ENCODE measurements at regions of chr2 and their contacts with region 1.

Region 1: DNA sequence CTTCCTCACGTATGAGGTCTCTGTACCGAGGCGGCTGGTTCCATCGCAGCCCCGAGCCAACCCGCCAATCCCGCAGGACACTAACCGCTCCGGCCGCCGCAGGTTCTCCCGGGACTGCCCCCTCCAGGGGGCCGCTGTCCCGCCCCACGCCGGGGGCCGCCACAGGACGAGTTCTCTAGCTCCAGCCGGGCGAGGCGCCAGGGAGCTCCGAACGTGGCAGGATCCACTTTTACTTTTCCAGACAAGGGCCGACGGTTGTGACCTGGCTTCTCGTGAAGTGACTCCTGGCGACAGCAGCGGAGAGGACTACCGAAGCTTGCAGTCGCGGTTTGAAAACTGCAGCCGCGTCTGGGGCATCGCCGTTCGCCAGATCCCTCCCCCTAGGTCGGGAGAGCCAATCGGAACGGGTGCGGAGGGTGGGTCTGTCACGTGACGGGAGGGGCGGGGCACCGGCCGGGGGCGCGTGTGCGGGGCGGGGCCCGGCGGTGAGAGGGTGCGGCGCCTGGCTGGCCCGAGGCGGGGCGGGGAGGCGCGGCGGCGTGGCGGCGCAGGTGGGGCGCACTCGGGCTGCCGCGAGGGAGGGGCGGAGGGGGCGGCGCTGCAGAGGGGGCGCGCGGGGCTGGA is at the start of gene STK17B:
- DNase-seq: peak; percentile 96
- ATAC-seq: peak; percentile 73
- H3K4me3 ChIP-seq: peak within 1 kb of the TSS; percentile 96
- H3K27ac ChIP-seq: peak within 1 kb of the TSS; percentile 49
- H3K4me1 ChIP-seq: peaks cover 28% of the 10 kb centered on the region
- H3K27me3 ChIP-seq: no peaks in the 10 kb centered on the region
- CTCF ChIP-seq: no peak
- total RNA-seq, gene STK17B: 21.3 and 22.1 TPM in 2 replicates

Region 2: GRCh38 chr2:196131384-196131937 is 39.9 kb before region 1 on chr2:
- CTCF ChIA-PET with region 1: no interaction called
- POLR2A ChIA-PET with region 1: no interaction called
- intact Hi-C with region 1: loop called (anchors 2 kb)
- DNase-seq: peak; percentile 71
- ATAC-seq: peak; percentile 65
- H3K4me3 ChIP-seq: no peak overlapping the region
- H3K27ac ChIP-seq: no peak overlapping the region
- H3K4me1 ChIP-seq: no peaks in the 10 kb centered on the region
- H3K27me3 ChIP-seq: no peaks in the 10 kb centered on the region
- CTCF ChIP-seq: peak; percentile 72

Region 3: GRCh38 chr2:196143730-196144131 is 27.6 kb before region 1 on chr2:
- CTCF ChIA-PET with region 1: interaction called, 6 read pairs
- POLR2A ChIA-PET with region 1: interaction called, 4 read pairs
- intact Hi-C with region 1: loop called (anchors 1 kb)
- DNase-seq: peak; percentile 87
- ATAC-seq: peak; percentile 97
- H3K4me3 ChIP-seq: no peak overlapping the region
- H3K27ac ChIP-seq: peak overlapping the region; percentile 52
- H3K4me1 ChIP-seq: peaks cover 17% of the 10 kb centered on the region
- H3K27me3 ChIP-seq: no peaks in the 10 kb centered on the region
- CTCF ChIP-seq: no peak

Region 4: DNA sequence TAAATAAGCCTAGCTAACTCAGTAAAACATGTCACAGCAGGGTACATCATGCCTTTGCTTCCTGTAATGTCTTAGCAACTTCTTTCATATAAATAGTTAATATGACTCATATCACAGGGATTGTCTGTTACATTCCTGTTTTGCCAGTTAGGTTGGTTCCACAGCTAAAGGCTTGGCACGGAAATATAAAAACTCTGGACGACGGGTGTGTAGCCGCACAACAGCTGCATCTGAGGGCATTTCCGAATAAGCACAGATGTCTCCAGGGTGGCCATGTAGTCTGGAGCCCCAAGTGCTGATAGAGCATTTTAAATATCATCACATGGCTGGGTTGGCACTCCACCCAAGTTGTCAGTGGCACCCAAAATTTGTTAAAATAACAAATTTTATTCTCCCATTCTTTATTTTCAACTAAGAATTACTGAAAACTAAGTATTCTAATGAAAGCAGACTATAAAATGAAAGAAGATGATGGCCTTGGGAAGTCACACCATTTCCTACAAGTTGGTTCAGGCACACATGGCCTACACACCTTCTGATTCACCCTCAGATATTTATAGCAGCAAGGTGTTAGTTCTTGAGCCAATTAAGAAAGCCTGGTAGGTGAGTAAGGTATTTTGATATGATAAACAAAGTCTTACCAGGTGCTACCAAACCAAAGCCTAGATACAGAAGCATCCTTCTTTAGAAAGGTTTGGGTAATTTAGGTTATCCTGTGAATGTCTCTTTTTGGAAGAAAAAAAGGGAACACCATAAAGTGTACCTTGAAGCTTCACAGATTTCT is 61.9 kb after region 1 on chr2:
- CTCF ChIA-PET with region 1: no interaction called
- POLR2A ChIA-PET with region 1: interaction called, 10 read pairs
- intact Hi-C with region 1: loop called (anchors 2 kb)
- DNase-seq: peak; percentile 97
- ATAC-seq: peak; percentile 96
- H3K4me3 ChIP-seq: peak overlapping the region; percentile 13; the same call in 1 of the 2 replicates
- H3K27ac ChIP-seq: peak overlapping the region; percentile 77
- H3K4me1 ChIP-seq: peaks cover 26% of the 10 kb centered on the region
- H3K27me3 ChIP-seq: no peaks in the 10 kb centered on the region
- CTCF ChIP-seq: no peak

Region 5: DNA sequence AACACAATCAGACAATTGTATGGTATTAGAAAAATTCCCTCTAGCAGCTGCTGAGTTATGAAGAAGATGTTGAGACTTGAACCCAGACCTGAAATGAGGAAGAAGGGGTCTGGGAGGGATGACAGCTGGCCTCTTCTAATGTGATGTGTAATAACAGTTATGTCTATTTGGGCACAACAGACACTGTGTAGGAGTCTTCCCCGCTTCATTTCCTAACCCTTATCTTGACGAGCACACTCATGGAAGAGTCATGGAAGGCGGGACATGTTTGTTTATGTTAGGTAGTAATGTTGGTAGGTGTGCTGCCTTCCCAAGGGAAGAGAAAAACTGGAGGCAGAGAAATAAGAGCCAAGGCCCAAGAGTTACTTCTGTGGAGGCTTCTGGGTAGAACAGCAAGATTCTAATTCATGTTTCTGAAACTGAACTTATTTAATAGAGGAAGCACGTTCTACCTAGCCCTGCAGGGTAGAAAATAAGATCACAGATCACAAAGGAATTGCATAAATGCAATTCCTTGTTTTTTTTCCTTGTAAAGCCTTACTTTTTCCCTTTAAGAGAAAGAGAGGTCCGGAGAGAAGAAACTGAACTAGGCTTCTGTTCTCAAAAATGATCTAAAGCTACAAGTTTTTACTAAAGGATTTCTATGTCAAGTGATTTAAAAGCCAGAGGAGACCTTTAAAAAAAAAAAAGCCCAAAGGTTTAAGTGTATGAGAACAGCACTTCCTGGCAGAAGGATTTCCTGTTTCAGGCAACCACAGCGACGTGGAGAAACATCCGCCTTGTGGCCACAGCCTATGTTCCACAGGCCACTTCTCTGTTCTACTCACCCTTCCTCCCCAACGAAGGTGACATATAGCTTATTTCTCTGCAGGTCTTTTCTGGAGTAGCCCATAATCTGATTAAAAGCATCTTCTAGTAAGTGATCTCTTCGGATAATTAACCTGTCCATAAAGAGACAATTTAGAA is 68.5 kb after region 1 on chr2:
- CTCF ChIA-PET with region 1: no interaction called
- POLR2A ChIA-PET with region 1: no interaction called
- intact Hi-C with region 1: loop called (anchors 1 kb)
- DNase-seq: peak; percentile 97
- ATAC-seq: peak; percentile 97
- H3K4me3 ChIP-seq: peak overlapping the region; percentile 25; the same call in 1 of the 2 replicates
- H3K27ac ChIP-seq: peak overlapping the region; percentile 94
- H3K4me1 ChIP-seq: peaks cover 25% of the 10 kb centered on the region
- H3K27me3 ChIP-seq: no peaks in the 10 kb centered on the region
- CTCF ChIP-seq: 0 out of 2 replicates have a peak, but pooled peaks have one; percentile 33

Region 6: DNA sequence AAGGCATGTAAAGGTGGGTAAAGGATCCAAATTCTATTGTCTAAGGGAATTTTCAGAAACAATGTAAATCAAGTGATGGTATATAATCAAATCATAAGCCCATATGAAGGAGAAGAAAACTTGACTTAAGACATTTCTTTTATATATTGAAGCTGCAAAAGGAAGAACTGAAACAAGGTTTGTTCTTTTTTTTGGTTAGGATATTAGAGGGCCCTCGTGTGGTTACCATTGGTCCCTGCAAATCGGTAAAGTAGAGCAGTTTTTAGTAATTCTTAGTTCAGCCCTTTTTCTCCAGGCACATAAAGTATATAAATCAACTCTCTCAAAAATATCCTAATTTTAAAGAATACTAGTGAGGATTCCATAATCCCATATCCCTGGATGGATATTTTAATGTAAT is 105.6 kb after region 1 on chr2:
- CTCF ChIA-PET with region 1: interaction called, 3 read pairs
- POLR2A ChIA-PET with region 1: no interaction called
- intact Hi-C with region 1: loop called (anchors 1 kb)
- DNase-seq: peak; percentile 59
- ATAC-seq: no peak
- H3K4me3 ChIP-seq: no peak overlapping the region
- H3K27ac ChIP-seq: no peak overlapping the region; the same call in 1 of the 2 replicates
- H3K4me1 ChIP-seq: peaks cover 30% of the 10 kb centered on the region
- H3K27me3 ChIP-seq: no peaks in the 10 kb centered on the region
- CTCF ChIP-seq: peak; percentile 86

Region 7: GRCh38 chr2:196322973-196323810 is 151.8 kb after region 1 on chr2:
- CTCF ChIA-PET with region 1: no interaction called
- POLR2A ChIA-PET with region 1: no interaction called
- intact Hi-C with region 1: no loop called
- DNase-seq: peak; percentile 23
- ATAC-seq: peak; percentile 31; the same call in 1 of the 2 replicates
- H3K4me3 ChIP-seq: no peak overlapping the region
- H3K27ac ChIP-seq: no peak overlapping the region
- H3K4me1 ChIP-seq: peaks cover 11% of the 10 kb centered on the region
- H3K27me3 ChIP-seq: no peaks in the 10 kb centered on the region
- CTCF ChIP-seq: no peak

Measured in PC-3 (cell line).